ENCODE measurements at regions of chr9 and their contacts with region 1.

Region 1: GRCh38 chr9:3161665-3162306 is 317.9 kb upstream of the PUM3 start:
- DNase-seq: no peak
- ATAC-seq: no peak
- H3K4me3 ChIP-seq: no peak overlapping the region
- H3K27ac ChIP-seq: no peak overlapping the region
- H3K4me1 ChIP-seq: no peaks in the 10 kb centered on the region
- H3K27me3 ChIP-seq: peaks cover 0 to 25% (median 15%) of the 10 kb centered on the region in 7 donors
- CTCF ChIP-seq: no peak

Region 2: GRCh38 chr9:2933165-2934095 is 228.4 kb before region 1 on chr9:
- intact Hi-C with region 1: no loop called
- DNase-seq: no peak
- ATAC-seq: peak in 2 of 8 donors; percentile 17 to 18
- H3K4me3 ChIP-seq: no peak overlapping the region
- H3K27ac ChIP-seq: no peak overlapping the region
- H3K4me1 ChIP-seq: no peaks in the 10 kb centered on the region
- H3K27me3 ChIP-seq: peaks cover 0 to 10% (median 0%) of the 10 kb centered on the region in 7 donors
- CTCF ChIP-seq: no peak

Region 3: GRCh38 chr9:3224931-3225330 is 63.1 kb after region 1 on chr9:
- intact Hi-C with region 1: loop called in 1 of 10 experiments (anchors 10 kb)
- DNase-seq: peak in 1 of 2 donors; percentile 5
- ATAC-seq: peak in 2 of 8 donors; percentile 56 to 78
- H3K4me3 ChIP-seq: no peak overlapping the region
- H3K27ac ChIP-seq: no peak overlapping the region
- H3K4me1 ChIP-seq: no peaks in the 10 kb centered on the region
- H3K27me3 ChIP-seq: no peaks in the 10 kb centered on the region
- CTCF ChIP-seq: no peak

Measured in heart right ventricle (tissue), 16 donors.